T-cell (primary cell): ENCODE measurements at regions of chr16 and their contacts with region 1.

Region 1: GRCh38 chr16:19583665-19584300 is 28.3 kb downstream of the VPS35L start:
- DNase-seq: peak in 14 of 35 experiments; percentile 2 to 59 (median 12)
- ATAC-seq: peak; percentile 53 to 77 (median 58)
- H3K4me3 ChIP-seq: no peak overlapping the region
- H3K4me3 Mint-ChIP-seq: no peak overlapping the region
- H3K27ac ChIP-seq: no peak overlapping the region
- H3K27ac Mint-ChIP-seq: no peak overlapping the region
- H3K4me1 ChIP-seq: no peaks in the 10 kb centered on the region
- H3K4me1 Mint-ChIP-seq: peaks cover 0 to 4% (median 0%) of the 10 kb centered on the region in 3 donors
- H3K27me3 ChIP-seq: no peaks in the 10 kb centered on the region
- H3K27me3 Mint-ChIP-seq: no peaks in the 10 kb centered on the region

Region 2: GRCh38 chr16:19886073-19886941 is 302.5 kb after region 1 on chr16:
- CTCF ChIA-PET with region 1: interaction called in 1 of 2 experiments, 20 read pairs
- POLR2A ChIA-PET with region 1: interaction called in 1 of 2 experiments, 3 read pairs
- DNase-seq: peak; percentile 55 to 88 (median 72)
- ATAC-seq: peak; percentile 51 to 58 (median 54)
- H3K4me3 ChIP-seq: peak overlapping the region; percentile 10 to 52
- H3K4me3 Mint-ChIP-seq: peak overlapping the region; percentile 82 to 92 (median 87)
- H3K27ac ChIP-seq: no peak overlapping the region
- H3K27ac Mint-ChIP-seq: no peak overlapping the region
- H3K4me1 ChIP-seq: peaks cover 2 to 34% of the 10 kb centered on the region in 2 experiments
- H3K4me1 Mint-ChIP-seq: peaks cover 25 to 30% (median 25%) of the 10 kb centered on the region in 3 donors
- H3K27me3 ChIP-seq: peaks cover 0 to 52% of the 10 kb centered on the region in 2 experiments
- H3K27me3 Mint-ChIP-seq: peaks cover 16 to 28% of the 10 kb centered on the region in 2 donors